Caco-2 (cell line): ENCODE measurements at regions of chr12 and their contacts with region 1.

Region 1: DNA sequence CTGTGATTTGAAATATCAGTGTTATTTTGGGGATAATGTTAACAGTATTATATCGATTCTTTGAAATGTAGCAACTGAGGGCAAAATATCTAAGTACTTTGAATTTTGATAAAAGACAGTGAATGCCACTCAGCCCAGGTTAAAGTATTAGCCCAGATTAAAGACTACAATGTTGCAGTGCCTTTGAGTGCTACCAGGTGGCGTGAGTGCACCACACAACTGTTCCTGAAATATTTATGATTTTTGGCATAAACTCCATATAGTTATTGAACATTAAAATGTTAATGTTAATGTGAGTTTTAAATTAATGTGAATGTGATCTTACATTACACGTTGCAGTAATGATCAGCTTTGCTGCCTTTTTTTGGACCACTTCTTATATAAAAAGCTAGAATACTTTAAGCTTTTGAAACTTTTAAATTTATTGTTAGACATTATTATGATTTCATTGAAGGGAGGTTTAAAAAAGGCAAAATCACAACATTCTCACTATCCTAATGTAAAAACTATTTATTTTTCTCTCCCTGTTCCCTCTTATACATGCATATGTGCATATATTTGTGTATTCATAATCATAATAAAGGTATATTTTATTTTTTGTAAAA is 22.5 kb downstream of the MRPS35 start:
- DNase-seq: peak in 1 of 2 experiments; percentile 49
- H3K4me3 ChIP-seq: no peak overlapping the region
- H3K4me3 Mint-ChIP-seq: no peak overlapping the region
- H3K27ac Mint-ChIP-seq: no peak overlapping the region
- H3K4me1 ChIP-seq: no peaks in the 10 kb centered on the region
- H3K4me1 Mint-ChIP-seq: no peaks in the 10 kb centered on the region
- H3K27me3 ChIP-seq: no peaks in the 10 kb centered on the region
- H3K27me3 Mint-ChIP-seq: no peaks in the 10 kb centered on the region
- CTCF ChIP-seq: peak; percentile 89 to 93

Region 2: GRCh38 chr12:27779920-27780611 is 46.9 kb after region 1 on chr12 and contains the starts of genes KLHL42 and MANSC4:
- CTCF ChIA-PET with region 1: no interaction called
- POLR2A ChIA-PET with region 1: interaction called, 9 read pairs
- intact Hi-C with region 1: loop called (anchors 1 kb)
- DNase-seq: peak; percentile 78 to 87
- H3K4me3 ChIP-seq: peak within 1 kb of the TSS; percentile 95
- H3K4me3 Mint-ChIP-seq: peak within 1 kb of the TSS; percentile 83
- H3K27ac Mint-ChIP-seq: peak within 1 kb of the TSS; percentile 86
- H3K4me1 ChIP-seq: 0 out of 2 replicates have a peak, but pooled peaks cover 3% of the 10 kb centered on the region
- H3K4me1 Mint-ChIP-seq: peaks cover 26% of the 10 kb centered on the region
- H3K27me3 ChIP-seq: no peaks in the 10 kb centered on the region
- H3K27me3 Mint-ChIP-seq: no peaks in the 10 kb centered on the region
- CTCF ChIP-seq: no peak
- total RNA-seq, gene KLHL42: 36.5 and 38.1 TPM in 2 replicates
- total RNA-seq, gene MANSC4: not detected in 2 replicates

Region 3: DNA sequence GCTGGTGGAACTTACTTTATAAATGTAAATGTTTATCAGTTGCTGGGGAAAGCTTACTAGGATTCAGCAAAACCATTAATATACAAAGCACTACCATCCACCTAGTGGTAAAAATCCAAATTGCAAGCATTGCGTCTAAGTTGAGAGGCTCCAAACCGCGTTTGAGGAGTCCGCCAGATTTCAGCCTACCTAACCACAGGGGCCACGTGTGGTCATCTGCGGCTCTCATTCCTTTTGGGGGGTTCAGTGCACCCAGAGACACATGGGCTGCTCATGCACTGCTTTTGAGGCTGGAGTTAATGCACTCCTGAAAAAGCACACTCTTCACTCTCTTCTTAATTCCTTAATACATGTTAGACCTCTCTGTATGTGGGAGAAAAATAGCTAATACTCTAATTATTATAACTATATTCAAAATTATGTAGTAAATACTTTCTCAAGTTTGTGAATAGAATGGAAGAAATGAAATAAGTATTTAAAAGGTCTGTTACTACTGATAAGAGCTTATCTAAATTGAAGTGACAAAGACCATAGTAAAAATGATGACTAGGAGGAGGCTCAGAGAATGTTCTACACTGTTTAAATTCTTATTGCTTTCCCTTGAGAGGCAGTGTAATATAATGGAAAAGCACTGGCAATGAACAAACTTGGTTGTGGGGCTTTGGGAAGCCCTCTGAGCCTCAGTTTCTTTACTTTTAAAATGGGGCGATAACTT is 88.3 kb after region 1 on chr12:
- CTCF ChIA-PET with region 1: interaction called, 5 read pairs
- POLR2A ChIA-PET with region 1: no interaction called
- intact Hi-C with region 1: loop called (anchors 1 kb)
- DNase-seq: peak in 1 of 2 experiments; percentile 82
- H3K4me3 ChIP-seq: no peak overlapping the region
- H3K4me3 Mint-ChIP-seq: no peak overlapping the region
- H3K27ac Mint-ChIP-seq: no peak overlapping the region
- H3K4me1 ChIP-seq: no peaks in the 10 kb centered on the region; the same call in none of the 2 replicates
- H3K4me1 Mint-ChIP-seq: peaks cover 4% of the 10 kb centered on the region
- H3K27me3 ChIP-seq: no peaks in the 10 kb centered on the region
- H3K27me3 Mint-ChIP-seq: no peaks in the 10 kb centered on the region
- CTCF ChIP-seq: peak; percentile 74 to 89

Region 4: DNA sequence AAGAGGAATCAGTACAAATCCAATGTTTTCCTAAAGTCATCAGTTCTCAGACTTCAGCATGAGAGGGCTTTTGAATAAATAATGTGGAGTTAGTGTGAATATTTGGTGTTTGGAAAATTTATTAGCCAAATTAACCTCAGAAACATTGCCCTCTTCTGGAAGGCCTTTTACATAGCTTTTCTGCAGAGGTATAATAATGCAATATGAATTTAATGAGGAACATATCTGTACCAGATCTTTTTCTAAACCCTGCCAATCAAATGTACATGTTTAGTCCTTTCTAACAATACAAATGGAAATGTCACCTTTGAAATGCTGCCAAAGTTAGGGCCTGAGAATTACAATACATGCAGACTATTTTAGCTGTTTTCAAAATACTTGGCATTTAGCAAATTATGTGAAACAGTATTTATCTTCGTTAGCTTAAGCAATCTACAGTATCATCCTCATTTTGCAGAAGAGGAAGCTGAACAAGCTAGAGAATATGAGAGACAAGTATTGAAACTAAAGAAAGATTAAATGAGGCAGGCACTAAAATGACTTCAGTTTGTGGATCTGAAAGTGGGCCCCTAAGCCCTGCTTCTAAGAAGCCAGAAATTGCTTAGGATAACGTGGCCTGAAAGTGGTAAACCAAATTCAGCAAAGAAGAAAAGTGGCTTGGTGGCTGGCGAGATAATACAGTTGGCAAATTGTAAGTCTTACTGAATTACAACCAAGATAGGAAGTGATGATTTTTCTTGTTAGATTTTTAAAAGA is 107.3 kb after region 1 on chr12:
- CTCF ChIA-PET with region 1: no interaction called
- POLR2A ChIA-PET with region 1: no interaction called
- intact Hi-C with region 1: loop called (anchors 1 kb)
- DNase-seq: no peak
- H3K4me3 ChIP-seq: no peak overlapping the region
- H3K4me3 Mint-ChIP-seq: no peak overlapping the region
- H3K27ac Mint-ChIP-seq: no peak overlapping the region
- H3K4me1 ChIP-seq: peaks cover 35% of the 10 kb centered on the region
- H3K4me1 Mint-ChIP-seq: peaks cover 35% of the 10 kb centered on the region
- H3K27me3 ChIP-seq: no peaks in the 10 kb centered on the region
- H3K27me3 Mint-ChIP-seq: no peaks in the 10 kb centered on the region
- CTCF ChIP-seq: no peak

Region 5: GRCh38 chr12:28172434-28173030 is 439.4 kb after region 1 on chr12:
- CTCF ChIA-PET with region 1: no interaction called
- POLR2A ChIA-PET with region 1: no interaction called
- intact Hi-C with region 1: loop called (anchors 1 kb)
- DNase-seq: peak in 1 of 2 experiments; percentile 59
- H3K4me3 ChIP-seq: no peak overlapping the region
- H3K4me3 Mint-ChIP-seq: no peak overlapping the region
- H3K27ac Mint-ChIP-seq: no peak overlapping the region
- H3K4me1 ChIP-seq: no peaks in the 10 kb centered on the region
- H3K4me1 Mint-ChIP-seq: no peaks in the 10 kb centered on the region
- H3K27me3 ChIP-seq: no peaks in the 10 kb centered on the region
- H3K27me3 Mint-ChIP-seq: peaks cover 6% of the 10 kb centered on the region
- CTCF ChIP-seq: peak; percentile 62 to 84

Region 6: GRCh38 chr12:28963554-28963953 is 1230.4 kb after region 1 on chr12:
- CTCF ChIA-PET with region 1: no interaction called
- POLR2A ChIA-PET with region 1: no interaction called
- intact Hi-C with region 1: loop called (anchors 10 kb)
- DNase-seq: peak in 1 of 2 experiments; percentile 29
- H3K4me3 ChIP-seq: no peak overlapping the region
- H3K4me3 Mint-ChIP-seq: no peak overlapping the region
- H3K27ac Mint-ChIP-seq: no peak overlapping the region
- H3K4me1 ChIP-seq: no peaks in the 10 kb centered on the region
- H3K4me1 Mint-ChIP-seq: no peaks in the 10 kb centered on the region
- H3K27me3 ChIP-seq: no peaks in the 10 kb centered on the region; the same call in 1 of the 2 replicates
- H3K27me3 Mint-ChIP-seq: peaks cover 9% of the 10 kb centered on the region
- CTCF ChIP-seq: peak; percentile 28 to 42